ENCODE measurements at regions of chr3 and their contacts with region 1.

Region 1: DNA sequence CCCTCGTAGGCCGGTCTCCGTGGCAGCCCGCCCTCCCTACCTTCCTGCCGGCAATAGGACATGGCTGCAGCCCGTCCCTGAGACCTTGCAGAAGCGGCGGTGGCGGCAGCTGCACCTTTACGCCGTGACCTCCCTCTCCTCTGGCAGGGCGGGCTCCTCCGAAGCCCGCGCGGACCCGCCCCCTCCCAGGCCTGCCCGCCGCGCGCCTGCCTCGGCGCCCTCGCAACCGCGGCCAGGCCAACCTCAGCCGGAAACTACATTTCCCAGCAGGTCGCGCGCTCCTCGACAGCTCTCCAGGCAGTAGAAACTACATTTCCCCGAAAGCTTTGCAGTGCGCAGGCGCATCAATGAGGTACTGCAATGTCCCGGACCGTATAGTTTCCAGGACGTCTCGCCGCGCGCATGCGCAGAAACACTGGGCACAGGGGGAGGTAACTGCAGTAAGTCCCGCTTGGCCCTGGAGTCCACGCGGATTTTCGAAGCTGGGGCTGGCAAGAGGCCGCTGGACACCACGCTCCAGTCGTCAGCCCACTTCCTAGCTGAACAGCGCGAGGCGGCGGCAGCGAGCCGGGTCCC is at the starts of genes CHCHD4 and TMEM43:
- DNase-seq: peak; percentile 98 to 99 (median 99)
- H3K4me3 ChIP-seq: peak within 1 kb of the TSS; percentile 72
- H3K27ac ChIP-seq: peak within 1 kb of the TSS; percentile 49 to 88
- H3K4me1 ChIP-seq: peaks cover 18% of the 10 kb centered on the region
- H3K27me3 ChIP-seq: no peaks in the 10 kb centered on the region
- CTCF ChIP-seq: no peak
- EP300 ChIP-seq: no peak
- POLR2A ChIP-seq: peak; percentile 79
- total RNA-seq, gene CHCHD4: 10.1 to 16.7 (median 12.2) TPM
- total RNA-seq, gene TMEM43: 72.0 to 100.0 (median 87.3) TPM

Region 2: GRCh38 chr3:14141602-14142341 is 17.1 kb after region 1 on chr3:
- intact Hi-C with region 1: loop called in 1 of 4 experiments (anchors 2 kb)
- DNase-seq: peak in 1 of 5 donors; percentile 20
- H3K4me3 ChIP-seq: no peak overlapping the region
- H3K27ac ChIP-seq: peak overlapping the region in 1 of 2 donors; percentile 22
- H3K4me1 ChIP-seq: peaks cover 10% of the 10 kb centered on the region
- H3K27me3 ChIP-seq: no peaks in the 10 kb centered on the region
- CTCF ChIP-seq: no peak
- EP300 ChIP-seq: no peak
- POLR2A ChIP-seq: no peak

Region 3: DNA sequence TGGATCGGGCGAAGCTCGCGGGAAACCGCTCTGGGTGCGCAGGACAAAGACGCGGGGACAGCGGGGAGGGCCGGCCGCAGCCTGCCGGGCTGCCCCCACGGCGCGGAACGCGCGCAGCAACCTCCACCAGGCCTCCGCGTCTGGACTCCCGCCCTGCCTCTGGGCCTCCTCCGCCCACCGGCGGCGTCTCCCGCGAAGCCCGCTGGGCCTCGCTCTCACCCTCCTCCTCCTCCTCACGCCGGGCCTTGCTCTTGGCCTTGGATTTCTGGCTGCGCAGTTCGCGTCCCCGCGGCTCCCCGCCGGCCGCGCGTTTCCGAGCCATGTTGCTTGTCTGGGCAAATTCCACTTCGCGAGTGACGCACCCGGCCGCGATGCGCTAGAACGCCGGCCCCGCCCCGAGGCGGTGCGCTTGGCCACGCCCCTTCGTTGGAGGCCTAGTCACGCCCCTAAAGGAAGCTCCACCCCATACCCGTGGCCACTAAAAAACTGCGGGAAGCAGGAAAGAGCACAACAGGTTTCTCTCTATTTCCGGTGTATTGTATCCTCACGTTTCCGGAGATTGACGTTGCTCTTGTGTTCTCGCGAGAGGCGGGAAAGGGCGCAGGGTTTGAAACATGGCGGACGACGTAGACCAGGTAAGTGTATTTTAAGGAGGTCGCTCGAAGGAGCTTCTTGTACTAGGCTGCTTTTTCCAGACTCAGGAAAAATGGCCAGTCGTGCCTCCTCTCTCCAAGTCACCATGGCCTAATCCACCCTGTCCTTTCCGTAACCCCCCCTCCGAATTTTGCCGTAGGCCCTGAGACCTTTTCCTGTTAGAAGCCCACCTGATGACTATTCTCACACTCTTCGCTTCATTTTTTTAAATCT is 53.8 kb after region 1 on chr3 and contains the starts of genes LSM3 and XPC:
- intact Hi-C with region 1: loop called in 2 of 4 experiments (anchors 2 to 10 kb)
- DNase-seq: peak; percentile 97 to 99 (median 98)
- H3K4me3 ChIP-seq: peak within 1 kb of the TSS; percentile 97
- H3K27ac ChIP-seq: peak within 1 kb of the TSS; percentile 92 to 96
- H3K4me1 ChIP-seq: peaks cover 11% of the 10 kb centered on the region
- H3K27me3 ChIP-seq: no peaks in the 10 kb centered on the region
- CTCF ChIP-seq: peak in 1 of 3 donors; percentile 21
- EP300 ChIP-seq: peak; percentile 27
- POLR2A ChIP-seq: peak; percentile 98
- total RNA-seq, gene LSM3: 7.9 to 12.0 (median 9.7) TPM
- total RNA-seq, gene XPC: 38.7 to 50.8 (median 40.6) TPM

Region 4: GRCh38 chr3:15443826-15444524 is 1319.3 kb after region 1 on chr3:
- intact Hi-C with region 1: no loop called
- DNase-seq: no peak
- H3K4me3 ChIP-seq: no peak overlapping the region
- H3K27ac ChIP-seq: no peak overlapping the region
- H3K4me1 ChIP-seq: no peaks in the 10 kb centered on the region
- H3K27me3 ChIP-seq: no peaks in the 10 kb centered on the region
- CTCF ChIP-seq: no peak
- EP300 ChIP-seq: no peak
- POLR2A ChIP-seq: no peak